ENCODE measurements at regions of chr13 and their contacts with region 1.

Region 1: DNA sequence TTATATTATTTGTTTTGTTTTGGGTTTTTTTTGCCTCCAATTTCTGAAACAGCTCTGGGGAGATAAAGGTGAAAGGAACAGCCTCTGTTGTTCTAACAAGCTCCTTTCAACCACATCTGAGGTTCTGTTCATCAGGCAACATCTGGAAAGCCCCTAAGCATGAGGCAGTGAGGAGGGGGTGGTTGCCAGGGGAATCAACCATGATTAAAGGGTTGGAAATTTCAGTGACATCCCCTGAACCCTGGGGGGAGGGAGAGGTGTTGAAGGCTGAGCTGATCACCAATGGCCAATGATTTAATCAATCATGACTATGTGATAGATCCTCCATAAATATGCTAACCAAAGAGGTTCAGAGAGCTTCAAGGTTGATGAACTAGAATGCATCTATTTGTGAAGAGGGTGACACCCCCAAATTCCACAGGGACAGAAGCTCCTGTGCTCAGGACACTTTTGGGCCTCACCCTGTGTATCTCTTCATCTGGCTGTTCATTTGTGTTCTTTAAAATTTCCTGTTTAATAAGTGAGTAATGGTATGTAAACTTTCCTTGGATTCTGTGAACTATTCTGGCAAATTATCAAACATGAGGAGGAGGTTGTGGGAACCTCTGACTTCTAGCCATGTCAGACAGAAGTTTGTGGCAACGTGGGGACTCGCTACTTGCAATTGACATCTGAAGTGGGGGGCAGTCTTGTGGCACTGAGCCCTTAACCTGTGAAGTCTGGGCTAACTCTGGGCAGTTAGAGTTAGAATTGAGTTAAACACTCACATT is 221.3 kb downstream of the NHLRC3 start:
- DNase-seq: no peak
- ATAC-seq: no peak

Region 2: GRCh38 chr13:38316129-38316528 is 943.4 kb before region 1 on chr13:
- intact Hi-C with region 1: no loop called
- DNase-seq: no peak
- ATAC-seq: no peak

Region 3: GRCh38 chr13:39144941-39145533 is 114.5 kb before region 1 on chr13:
- intact Hi-C with region 1: loop called in 1 of 2 experiments (anchors 10 kb)
- DNase-seq: peak in 1 of 2 donors; percentile 31
- ATAC-seq: peak; percentile 58

Region 4: GRCh38 chr13:39306639-39307589 is 47.4 kb after region 1 on chr13:
- intact Hi-C with region 1: no loop called
- DNase-seq: no peak
- ATAC-seq: no peak